ENCODE measurements at regions of chr4 and their contacts with region 1.

Region 1: DNA sequence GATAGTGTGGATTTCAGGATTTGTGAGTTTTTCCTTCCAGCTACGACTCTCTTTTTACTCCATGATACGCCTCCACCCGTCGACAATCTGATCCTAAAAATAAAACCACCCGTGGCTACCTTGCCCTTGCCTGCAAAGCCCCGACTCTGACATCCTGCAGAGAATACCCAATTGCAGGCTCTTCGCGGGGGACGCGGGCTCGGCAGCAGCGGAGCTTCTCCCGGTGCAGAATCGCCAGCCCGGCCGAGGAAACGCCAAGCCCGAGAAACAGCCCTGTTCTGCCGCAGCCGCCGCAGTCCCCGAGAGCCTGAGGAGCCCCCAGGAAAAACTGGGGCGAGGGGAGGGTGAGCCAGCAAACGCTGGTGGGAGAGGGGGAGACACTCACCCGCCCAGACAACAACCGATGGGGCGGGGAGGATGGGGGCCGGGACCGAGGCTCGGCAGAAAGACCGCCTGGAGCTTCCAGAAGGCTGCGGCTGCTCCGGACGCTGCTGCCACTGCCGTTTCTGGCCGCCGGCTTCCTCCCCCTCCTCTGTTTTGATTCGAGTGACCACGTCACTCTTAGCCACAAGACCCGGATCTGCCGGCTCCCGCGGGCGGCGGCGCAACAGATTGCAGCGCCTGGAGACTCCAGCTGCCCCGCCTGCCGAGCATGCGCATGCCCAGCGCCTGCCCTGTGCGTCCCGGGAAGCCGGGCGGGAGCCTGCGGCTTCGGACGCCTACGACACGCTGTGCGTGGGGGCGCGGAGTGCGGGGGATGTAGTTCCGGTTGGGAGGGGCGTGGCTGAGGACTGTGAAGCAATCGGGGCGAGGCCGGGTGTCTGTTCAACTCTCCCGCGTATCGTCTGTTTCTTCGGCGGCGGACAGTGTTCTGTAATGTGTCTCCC is at the start of gene SMIM14:
- DNase-seq: peak; percentile 96
- H3K4me3 Mint-ChIP-seq: peak within 1 kb of the TSS; percentile 93
- H3K27ac Mint-ChIP-seq: peak within 1 kb of the TSS; percentile 63
- H3K4me1 Mint-ChIP-seq: peaks cover 34% of the 10 kb centered on the region
- H3K27me3 Mint-ChIP-seq: no peaks in the 10 kb centered on the region
- total RNA-seq, gene SMIM14: 4.9 to 5.6 TPM

Region 2: DNA sequence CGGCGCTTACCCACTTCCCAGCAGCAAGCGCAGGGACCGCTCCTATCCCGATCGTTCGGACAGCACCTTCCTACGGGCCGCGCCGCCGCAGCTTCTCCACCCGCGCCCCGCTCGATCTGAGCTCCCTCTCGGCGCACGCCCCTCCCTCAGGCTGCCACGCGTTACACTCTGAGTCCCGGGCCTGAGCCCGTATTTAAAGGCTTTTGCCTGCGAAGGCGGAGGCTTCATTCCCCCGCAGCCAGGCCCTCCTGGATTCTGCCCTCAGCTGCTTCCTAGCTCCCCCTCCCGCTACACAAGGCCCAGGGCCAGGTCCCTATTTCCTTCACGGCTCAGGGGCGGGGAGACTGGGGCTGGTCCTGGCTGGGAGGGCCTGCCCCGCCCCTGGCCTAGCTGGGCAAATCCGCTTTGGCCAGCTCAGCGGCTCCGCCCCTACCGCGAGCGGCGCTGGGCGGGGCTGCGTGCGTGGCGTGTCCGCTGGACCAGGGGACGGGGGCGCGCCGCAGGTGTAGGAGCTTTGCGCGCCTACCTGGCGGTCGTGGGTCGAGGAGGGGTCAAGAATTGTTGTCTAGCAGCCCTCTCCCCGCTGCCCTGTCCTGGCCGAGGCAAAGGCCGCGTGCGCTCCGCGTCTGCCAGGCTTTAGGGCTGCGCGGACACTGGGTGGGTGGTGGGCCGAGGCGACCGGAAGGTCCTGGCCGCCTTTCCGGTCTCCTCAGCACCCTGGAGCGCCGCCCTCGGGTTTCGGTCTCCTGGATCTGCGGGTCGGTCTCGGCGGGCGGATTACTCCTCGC is 111.1 kb before region 1 on chr4 and contains the start of gene UGDH:
- CTCF ChIA-PET with region 1: no interaction called
- POLR2A ChIA-PET with region 1: interaction called, 13 read pairs
- intact Hi-C with region 1: loop called (anchors 1 kb)
- DNase-seq: peak; percentile 94
- H3K4me3 Mint-ChIP-seq: peak within 1 kb of the TSS; percentile 99
- H3K27ac Mint-ChIP-seq: peak within 1 kb of the TSS; percentile 90
- H3K4me1 Mint-ChIP-seq: peaks cover 18% of the 10 kb centered on the region
- H3K27me3 Mint-ChIP-seq: no peaks in the 10 kb centered on the region
- total RNA-seq, gene UGDH: 28.7 to 32.9 TPM

Region 3: DNA sequence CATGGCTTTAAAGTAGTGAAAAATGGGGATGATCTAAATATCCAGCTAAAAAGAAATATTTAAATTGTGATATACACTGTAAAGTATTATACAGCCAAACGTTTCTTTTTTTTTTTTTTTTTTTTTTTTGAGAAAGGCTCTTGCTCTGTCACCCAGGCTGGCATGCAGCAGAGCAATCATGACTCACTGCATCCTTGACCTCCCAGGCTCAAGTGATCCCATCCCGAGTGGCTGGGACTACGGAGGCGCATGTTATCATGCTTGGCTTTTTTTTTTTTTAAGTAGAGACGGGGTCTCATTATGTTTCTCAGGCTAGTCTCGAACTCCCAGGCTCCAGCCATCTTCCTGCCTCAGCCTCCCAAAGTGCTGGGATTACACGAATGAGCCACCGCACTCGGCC is 17.0 kb before region 1 on chr4:
- CTCF ChIA-PET with region 1: no interaction called
- POLR2A ChIA-PET with region 1: interaction called, 3 read pairs
- intact Hi-C with region 1: loop called (anchors 1 kb)
- DNase-seq: no peak
- H3K4me3 Mint-ChIP-seq: no peak overlapping the region
- H3K27ac Mint-ChIP-seq: no peak overlapping the region
- H3K4me1 Mint-ChIP-seq: peaks cover 9% of the 10 kb centered on the region
- H3K27me3 Mint-ChIP-seq: no peaks in the 10 kb centered on the region

Region 4: DNA sequence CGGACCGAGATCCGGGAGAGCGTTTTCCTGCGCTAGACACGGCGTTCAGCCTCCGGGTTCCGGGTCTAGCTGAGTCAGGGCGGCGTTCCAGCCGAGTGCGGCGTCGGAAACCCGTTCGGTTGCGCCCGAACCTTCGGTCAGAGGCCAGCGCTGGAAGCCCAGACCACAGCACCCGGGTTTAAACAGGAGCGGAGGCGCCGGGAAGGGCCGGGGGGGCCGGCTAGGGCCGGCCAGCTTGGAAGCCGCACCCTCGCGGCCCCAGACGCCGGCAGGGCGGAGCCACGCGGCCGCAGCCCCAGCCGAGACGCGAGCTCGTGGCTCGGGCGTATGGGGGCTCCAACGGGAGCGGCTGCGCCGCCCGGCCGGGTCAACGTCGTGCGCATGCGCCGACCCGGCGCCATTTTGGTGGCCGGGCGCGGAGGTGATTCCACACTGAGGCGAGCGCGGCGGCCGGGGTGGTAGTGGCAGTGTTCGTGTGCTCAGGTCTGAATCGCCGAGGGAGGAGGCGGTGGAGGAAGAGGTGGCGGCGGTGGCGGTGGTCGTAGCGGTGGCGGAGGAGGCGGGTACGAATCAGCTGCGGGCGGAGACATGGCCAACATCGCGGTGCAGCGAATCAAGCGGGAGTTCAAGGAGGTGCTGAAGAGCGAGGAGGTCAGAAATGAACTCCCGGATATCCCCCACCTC is 59.3 kb after region 1 on chr4 and contains the start of gene UBE2K:
- CTCF ChIA-PET with region 1: no interaction called
- POLR2A ChIA-PET with region 1: interaction called, 10 read pairs
- intact Hi-C with region 1: loop called (anchors 2 kb)
- DNase-seq: peak; percentile 92
- H3K4me3 Mint-ChIP-seq: peak within 1 kb of the TSS; percentile 96
- H3K27ac Mint-ChIP-seq: peak within 1 kb of the TSS; percentile 96
- H3K4me1 Mint-ChIP-seq: peaks cover 36% of the 10 kb centered on the region
- H3K27me3 Mint-ChIP-seq: no peaks in the 10 kb centered on the region
- total RNA-seq, gene UBE2K: 81.4 to 83.5 TPM